Activated naive CD4-positive, alpha-beta T cell treated with anti-CD3 and anti-CD28 coated beads for 36 hours (primary cell): ENCODE measurements at regions of chr5 and their contacts with region 1.

Region 1: DNA sequence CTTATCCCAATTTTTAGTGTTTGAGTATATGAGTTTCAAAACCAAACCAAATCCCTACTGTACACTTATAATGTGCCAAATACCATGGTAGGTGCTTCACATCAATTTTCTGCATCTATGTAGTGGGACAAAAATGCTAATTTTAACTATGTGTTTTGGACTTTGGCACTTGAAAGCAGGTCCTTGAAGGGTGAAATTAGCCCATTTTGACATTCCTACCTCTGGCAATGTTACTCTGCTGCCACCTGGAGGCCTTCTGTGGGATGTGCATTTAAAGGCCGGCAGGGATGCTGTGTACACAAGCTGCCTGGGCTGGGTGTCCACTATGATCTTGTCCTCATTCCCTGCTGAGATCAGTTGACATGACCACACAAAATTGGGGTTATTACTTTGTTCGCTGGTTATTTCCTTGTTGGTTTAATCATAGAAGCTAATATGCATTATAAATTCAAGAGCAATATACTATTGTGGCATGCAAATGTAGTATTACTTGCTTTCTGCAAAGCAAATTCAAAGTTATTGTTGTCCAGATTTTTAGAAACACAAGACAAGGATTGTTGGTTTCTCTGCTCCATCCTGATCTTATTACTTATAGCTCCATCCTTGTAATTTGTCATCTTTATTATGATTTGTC is 166.8 kb downstream of the ARHGEF28 start:
- DNase-seq: peak; percentile 80
- H3K4me3 Mint-ChIP-seq: no peak overlapping the region
- H3K27ac Mint-ChIP-seq: no peak overlapping the region
- H3K4me1 Mint-ChIP-seq: peaks cover 9% of the 10 kb centered on the region
- H3K27me3 Mint-ChIP-seq: peaks cover 30% of the 10 kb centered on the region

Region 2: DNA sequence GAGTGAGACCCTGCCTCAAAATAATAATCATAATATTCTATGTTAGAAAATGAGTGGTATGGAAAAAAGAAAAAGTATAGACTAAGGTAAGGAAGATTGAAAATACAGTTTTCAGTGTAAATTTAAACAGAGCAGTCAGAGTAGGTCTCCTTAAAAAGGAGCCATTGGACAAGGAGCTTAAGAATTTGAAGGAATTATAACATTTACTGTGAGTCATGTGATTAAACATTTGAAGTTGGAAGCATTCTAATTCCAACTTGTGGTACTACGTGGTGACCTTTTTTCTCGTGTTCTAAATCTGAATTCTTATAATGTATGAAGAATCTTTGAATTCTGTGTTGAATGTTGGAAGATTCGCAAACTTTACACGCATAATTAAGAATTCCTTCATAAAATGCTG is 711.7 kb before region 1 on chr5:
- CTCF ChIA-PET with region 1: no interaction called
- intact Hi-C with region 1: loop called (anchors 5 kb)
- DNase-seq: no peak
- H3K4me3 Mint-ChIP-seq: no peak overlapping the region
- H3K27ac Mint-ChIP-seq: no peak overlapping the region
- H3K4me1 Mint-ChIP-seq: no peaks in the 10 kb centered on the region
- H3K27me3 Mint-ChIP-seq: peaks cover 11% of the 10 kb centered on the region

Region 3: GRCh38 chr5:75336625-75337339 is 1544.0 kb after region 1 on chr5 and contains the start of gene HMGCR:
- CTCF ChIA-PET with region 1: no interaction called
- intact Hi-C with region 1: no loop called
- DNase-seq: peak; percentile 99
- H3K4me3 Mint-ChIP-seq: no peak within 1 kb of the TSS
- H3K27ac Mint-ChIP-seq: no peak within 1 kb of the TSS
- H3K4me1 Mint-ChIP-seq: peaks cover 35% of the 10 kb centered on the region
- H3K27me3 Mint-ChIP-seq: no peaks in the 10 kb centered on the region
- total RNA-seq, gene HMGCR: 61.7 to 67.5 TPM